ENCODE measurements at regions of chr13 and their contacts with region 1.

Region 1: DNA sequence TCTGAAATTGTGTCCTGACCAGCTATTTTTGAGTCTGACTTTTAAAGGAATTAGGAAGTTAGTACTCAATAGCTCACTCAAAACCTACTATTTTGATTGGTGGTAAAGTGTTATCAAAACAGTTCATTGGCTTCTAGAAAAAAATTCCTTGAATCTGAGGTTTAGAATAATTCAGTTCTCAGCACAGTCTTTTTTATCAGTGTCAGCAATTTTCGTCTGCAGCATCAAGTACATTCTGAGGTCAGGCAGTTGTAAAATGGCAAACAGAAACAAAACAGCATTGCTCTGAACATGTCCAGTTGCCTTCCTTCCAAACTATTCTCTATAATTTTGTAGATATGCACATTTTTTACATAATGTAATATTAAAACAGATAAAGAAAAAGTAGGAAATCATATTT is 1644.1 kb downstream of the SLITRK5 start:
- DNase-seq: no peak
- ATAC-seq: no peak
- H3K4me3 ChIP-seq: no peak overlapping the region
- H3K4me3 Mint-ChIP-seq: no peak overlapping the region
- H3K27ac ChIP-seq: no peak overlapping the region
- H3K27ac Mint-ChIP-seq: no peak overlapping the region
- H3K4me1 ChIP-seq: no peaks in the 10 kb centered on the region
- H3K4me1 Mint-ChIP-seq: no peaks in the 10 kb centered on the region
- H3K27me3 ChIP-seq: no peaks in the 10 kb centered on the region
- H3K27me3 Mint-ChIP-seq: no peaks in the 10 kb centered on the region
- CTCF ChIP-seq: no peak

Region 2: GRCh38 chr13:89279374-89279773 is 35.9 kb before region 1 on chr13:
- CTCF ChIA-PET with region 1: no interaction called
- POLR2A ChIA-PET with region 1: no interaction called
- intact Hi-C with region 1: loop called in 1 of 2 experiments (anchors 1 kb)
- DNase-seq: no peak
- ATAC-seq: no peak
- H3K4me3 ChIP-seq: no peak overlapping the region
- H3K4me3 Mint-ChIP-seq: no peak overlapping the region
- H3K27ac ChIP-seq: no peak overlapping the region
- H3K27ac Mint-ChIP-seq: no peak overlapping the region
- H3K4me1 ChIP-seq: no peaks in the 10 kb centered on the region
- H3K4me1 Mint-ChIP-seq: no peaks in the 10 kb centered on the region
- H3K27me3 ChIP-seq: no peaks in the 10 kb centered on the region
- H3K27me3 Mint-ChIP-seq: no peaks in the 10 kb centered on the region
- CTCF ChIP-seq: no peak